Activated T-helper 2 cell treated with anti-CD3 and anti-CD28 coated beads, Interferon-gamma antibody, Interleukin-2, Interleukin-4, amounts not matched to agents 10 μg/mL and 5 μg/mL and 100 μg/mL, durations not matched to agents 14 hours and 24 hours and 36 hours (primary cell): ENCODE measurements at regions of chr11 and their contacts with region 1.

Region 1: GRCh38 chr11:66126808-66127555 is 56.9 kb downstream of the PACS1 start:
- DNase-seq: peak; percentile 48
- H3K4me3 Mint-ChIP-seq: peak overlapping the region; percentile 67
- H3K27ac Mint-ChIP-seq: peak overlapping the region; percentile 95
- H3K4me1 Mint-ChIP-seq: peaks cover 56% of the 10 kb centered on the region
- H3K27me3 Mint-ChIP-seq: no peaks in the 10 kb centered on the region

Region 2: DNA sequence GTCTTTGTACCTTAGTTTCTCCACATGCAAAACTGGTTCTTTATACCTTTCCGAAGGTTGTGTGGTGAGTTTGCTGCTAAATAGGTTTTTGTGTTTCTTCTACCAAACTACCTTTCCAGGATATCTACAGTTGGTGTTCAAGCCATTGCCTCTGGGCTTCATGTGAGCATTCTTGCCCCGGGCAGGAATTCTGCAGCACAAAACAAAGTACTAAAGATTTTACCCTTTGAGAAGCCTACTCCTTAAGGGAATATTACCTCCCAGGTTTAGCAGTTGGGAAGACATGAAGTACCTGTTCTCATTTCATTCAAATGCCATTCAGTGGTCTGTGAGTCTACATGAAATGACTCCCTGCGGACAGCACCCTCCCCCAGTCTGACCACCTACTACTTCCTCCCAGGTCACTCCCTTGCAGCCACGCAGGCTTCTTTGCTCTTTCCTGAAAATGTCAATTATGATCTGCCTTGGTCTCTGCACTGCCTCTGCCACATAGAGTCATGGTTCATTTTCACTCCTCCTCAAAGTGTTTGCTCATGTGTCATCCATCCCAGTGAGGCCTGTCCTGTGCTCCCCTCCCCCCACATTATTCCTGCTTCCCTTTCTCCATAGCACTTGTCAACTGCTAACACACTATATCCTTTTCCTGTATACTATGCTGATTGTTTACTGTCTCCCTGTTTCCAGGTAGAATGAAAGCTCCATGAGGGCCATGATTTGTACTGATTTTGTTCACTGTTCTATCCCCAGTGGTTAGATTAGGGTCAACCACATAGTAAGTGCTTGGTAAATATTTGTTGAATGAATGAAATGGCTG is 20.0 kb before region 1 on chr11:
- intact Hi-C with region 1: loop called (anchors 1 kb)
- DNase-seq: no peak
- H3K4me3 Mint-ChIP-seq: peak overlapping the region; percentile 11
- H3K27ac Mint-ChIP-seq: peak overlapping the region; percentile 76
- H3K4me1 Mint-ChIP-seq: peaks cover 68% of the 10 kb centered on the region
- H3K27me3 Mint-ChIP-seq: no peaks in the 10 kb centered on the region

Region 3: DNA sequence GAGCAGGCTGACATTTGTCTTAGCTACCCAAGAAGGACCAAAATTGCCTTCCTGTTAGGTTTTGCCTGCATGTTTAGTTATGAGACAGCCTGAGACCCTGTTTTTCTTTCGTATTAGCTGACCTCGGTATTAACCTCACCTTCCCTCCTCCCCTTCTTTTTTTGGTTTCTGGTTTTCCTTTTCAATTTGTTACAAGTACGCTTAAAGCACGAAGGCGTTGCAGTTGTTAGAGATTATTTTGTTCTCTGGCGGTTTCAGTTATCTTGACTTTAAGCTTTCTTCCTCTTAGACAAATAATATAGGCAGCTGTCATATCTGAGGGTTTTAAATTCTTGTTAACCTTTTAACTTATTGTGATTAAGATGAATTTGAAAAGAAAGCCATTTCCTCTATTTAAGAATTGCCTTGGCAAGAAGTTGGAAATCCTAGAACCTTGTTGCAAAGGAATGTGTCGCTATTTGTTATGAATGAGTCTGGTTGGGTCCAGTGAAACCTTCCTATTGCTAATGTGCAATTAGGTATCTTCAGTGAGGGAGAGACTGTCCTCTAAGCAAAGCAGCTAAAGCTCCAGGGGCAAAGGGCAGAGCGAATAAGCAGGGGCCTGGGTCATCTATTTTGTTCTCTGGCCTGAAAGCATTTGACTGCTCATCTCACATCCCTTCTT is 11.2 kb before region 1 on chr11:
- intact Hi-C with region 1: loop called (anchors 1 kb)
- DNase-seq: no peak
- H3K4me3 Mint-ChIP-seq: peak overlapping the region; percentile 67
- H3K27ac Mint-ChIP-seq: peak overlapping the region; percentile 84
- H3K4me1 Mint-ChIP-seq: peaks cover 73% of the 10 kb centered on the region
- H3K27me3 Mint-ChIP-seq: no peaks in the 10 kb centered on the region